Breast epithelium (tissue), 4 donors: ENCODE measurements at regions of chr7 and their contacts with region 1.

Region 1: GRCh38 chr7:106080300-106080987 is 31.7 kb downstream of the SYPL1 start:
- DNase-seq: no peak
- H3K4me3 ChIP-seq: no peak overlapping the region
- H3K27ac ChIP-seq: no peak overlapping the region
- H3K4me1 ChIP-seq: no peaks in the 10 kb centered on the region
- H3K27me3 ChIP-seq: no peaks in the 10 kb centered on the region
- CTCF ChIP-seq: no peak
- POLR2A ChIP-seq: no peak

Region 2: DNA sequence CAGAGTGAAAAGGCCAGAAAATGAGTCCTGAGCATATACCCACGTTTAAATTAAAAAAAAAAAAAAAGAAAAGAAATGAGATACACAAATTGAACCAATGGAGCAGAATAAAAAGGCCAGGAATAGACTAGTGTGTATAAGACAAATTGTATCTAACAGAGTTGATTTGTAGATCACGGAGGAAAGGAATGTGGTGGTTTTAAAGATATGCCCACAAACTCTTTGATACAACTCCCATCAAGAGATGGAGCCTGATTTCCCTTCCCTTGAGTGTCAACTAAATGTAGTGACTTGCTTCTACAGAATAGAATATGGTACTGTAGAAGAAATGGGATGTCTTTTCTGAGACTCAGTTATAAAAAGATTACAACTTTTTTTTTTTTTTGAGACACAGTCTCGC is 21.3 kb after region 1 on chr7:
- intact Hi-C with region 1: loop called (anchors 1 kb)
- DNase-seq: no peak
- H3K4me3 ChIP-seq: no peak overlapping the region
- H3K27ac ChIP-seq: no peak overlapping the region
- H3K4me1 ChIP-seq: no peaks in the 10 kb centered on the region
- H3K27me3 ChIP-seq: no peaks in the 10 kb centered on the region
- CTCF ChIP-seq: no peak
- POLR2A ChIP-seq: no peak

Region 3: GRCh38 chr7:106112117-106112971 is 31.9 kb after region 1 on chr7 and contains the start of gene SYPL1:
- intact Hi-C with region 1: no loop called
- DNase-seq: peak; percentile 90 to 94
- H3K4me3 ChIP-seq: peak within 1 kb of the TSS; percentile 65 to 92 (median 83)
- H3K27ac ChIP-seq: peak within 1 kb of the TSS; percentile 99
- H3K4me1 ChIP-seq: peaks cover 0 to 8% of the 10 kb centered on the region in 2 donors
- H3K27me3 ChIP-seq: no peaks in the 10 kb centered on the region
- CTCF ChIP-seq: peak in 1 of 3 donors; percentile 25
- POLR2A ChIP-seq: peak; percentile 17
- total RNA-seq, gene SYPL1: 96.2 to 116 (median 98.3) TPM

Region 4: GRCh38 chr7:107924841-107925504 is 1844.5 kb after region 1 on chr7:
- intact Hi-C with region 1: no loop called
- DNase-seq: no peak
- H3K4me3 ChIP-seq: no peak overlapping the region
- H3K27ac ChIP-seq: peak overlapping the region in 1 of 2 donors; percentile 48
- H3K4me1 ChIP-seq: no peaks in the 10 kb centered on the region
- H3K27me3 ChIP-seq: no peaks in the 10 kb centered on the region
- CTCF ChIP-seq: no peak
- POLR2A ChIP-seq: no peak